ENCODE measurements at regions of chr9 and their contacts with region 1.

Region 1: DNA sequence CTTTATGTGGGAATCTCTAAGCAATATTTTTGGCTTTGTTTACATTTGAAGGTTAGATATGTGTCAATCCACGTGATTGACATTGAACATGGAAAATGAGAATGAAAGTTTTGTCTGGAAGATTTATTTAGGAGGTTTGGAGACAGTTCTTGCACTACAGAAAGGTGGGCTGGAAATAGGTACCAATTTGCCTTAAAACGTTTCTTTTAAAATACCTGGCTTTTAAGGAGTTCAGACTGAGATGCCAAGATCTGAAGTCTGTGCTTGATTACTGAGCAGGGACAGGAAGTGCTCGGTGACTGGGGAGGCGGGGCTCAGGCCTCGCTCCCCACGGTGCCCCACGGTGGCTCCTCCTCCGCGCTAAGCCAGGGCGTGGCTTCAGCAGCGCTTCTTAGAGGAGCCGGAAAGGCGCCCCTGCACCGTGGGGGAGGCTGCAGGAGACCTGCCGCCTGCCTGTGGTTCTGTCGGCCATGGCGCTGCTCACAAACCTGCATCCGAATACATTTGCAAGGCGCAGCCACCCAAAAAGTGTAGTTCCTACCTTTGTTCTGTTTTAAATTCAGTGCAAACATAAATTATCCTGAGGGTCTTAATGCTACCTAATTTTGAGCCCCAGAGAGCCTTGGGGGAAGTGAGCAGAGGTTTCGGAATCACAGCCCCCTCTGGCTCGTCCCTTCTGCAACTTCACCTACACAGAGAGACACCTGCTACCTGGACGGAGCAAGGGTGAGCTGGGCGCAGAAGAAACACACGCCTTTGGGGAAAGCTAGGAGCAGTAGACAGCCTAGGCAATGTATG is 49.2 kb downstream of the USP20 start:
- DNase-seq: peak; percentile 82 to 86
- H3K4me3 ChIP-seq: peak overlapping the region; percentile 25 to 70 (median 50)
- H3K27ac ChIP-seq: peak overlapping the region; percentile 81 to 92
- H3K4me1 ChIP-seq: peaks cover 5 to 14% of the 10 kb centered on the region in 2 donors
- H3K27me3 ChIP-seq: no peaks in the 10 kb centered on the region
- CTCF ChIP-seq: no peak
- POLR2A ChIP-seq: no peak

Region 2: DNA sequence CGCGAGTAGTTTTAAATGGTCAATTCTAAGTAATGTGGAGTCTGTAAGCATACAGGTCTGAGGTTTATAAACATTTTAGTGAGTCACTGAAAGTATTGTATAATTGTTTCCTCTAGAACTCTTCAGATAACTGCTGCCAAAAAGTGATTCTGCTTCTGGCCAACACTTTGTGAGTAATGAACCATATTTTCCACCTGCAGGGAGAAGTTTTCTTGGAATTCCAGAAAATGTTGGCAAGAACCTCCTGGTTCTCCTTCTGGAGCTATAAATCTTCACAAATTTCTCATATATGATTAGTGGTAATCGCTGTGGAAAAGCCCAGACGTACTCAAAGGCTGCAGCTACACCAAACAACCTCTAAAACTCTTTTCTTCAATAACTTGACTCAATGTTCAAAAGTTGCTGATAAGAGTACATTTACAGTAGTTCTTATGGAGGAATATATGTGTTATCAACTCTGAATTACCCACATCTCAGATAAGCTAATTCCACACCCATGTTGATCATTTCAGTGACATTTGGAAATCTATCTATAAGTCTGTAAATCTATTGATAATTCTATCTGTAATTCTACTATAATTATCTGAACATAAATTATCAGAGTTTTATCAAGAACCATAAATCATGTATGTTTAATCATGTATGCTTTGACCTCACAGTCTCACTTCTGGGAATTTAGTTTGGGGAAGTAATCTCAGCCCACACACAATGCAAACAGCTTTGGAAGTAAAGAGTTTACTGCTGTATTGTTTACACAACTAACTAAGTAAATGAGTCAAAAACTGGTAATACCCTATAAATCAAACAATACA is 84.5 kb after region 1 on chr9:
- intact Hi-C with region 1: no loop called
- DNase-seq: no peak
- H3K4me3 ChIP-seq: no peak overlapping the region
- H3K27ac ChIP-seq: peak overlapping the region; percentile 62 to 66
- H3K4me1 ChIP-seq: no peaks in the 10 kb centered on the region
- H3K27me3 ChIP-seq: no peaks in the 10 kb centered on the region
- CTCF ChIP-seq: no peak
- POLR2A ChIP-seq: no peak

Region 3: GRCh38 chr9:130042833-130043653 is 158.6 kb after region 1 on chr9 and contains the start of gene FNBP1:
- intact Hi-C with region 1: loop called (anchors 10 kb)
- DNase-seq: peak; percentile 48 to 74
- H3K4me3 ChIP-seq: peak within 1 kb of the TSS; percentile 87 to 99 (median 92)
- H3K27ac ChIP-seq: peak within 1 kb of the TSS; percentile 94 to 95
- H3K4me1 ChIP-seq: no peaks in the 10 kb centered on the region
- H3K27me3 ChIP-seq: no peaks in the 10 kb centered on the region
- CTCF ChIP-seq: no peak
- POLR2A ChIP-seq: peak; percentile 36
- total RNA-seq, gene FNBP1: 31.3 to 49.8 (median 41.9) TPM

Region 4: GRCh38 chr9:130069048-130069447 is 184.6 kb after region 1 on chr9:
- intact Hi-C with region 1: no loop called
- DNase-seq: no peak
- H3K4me3 ChIP-seq: no peak overlapping the region
- H3K27ac ChIP-seq: no peak overlapping the region
- H3K4me1 ChIP-seq: no peaks in the 10 kb centered on the region
- H3K27me3 ChIP-seq: no peaks in the 10 kb centered on the region
- CTCF ChIP-seq: no peak
- POLR2A ChIP-seq: no peak